ENCODE measurements at regions of chr15 and their contacts with region 1.

Region 1: DNA sequence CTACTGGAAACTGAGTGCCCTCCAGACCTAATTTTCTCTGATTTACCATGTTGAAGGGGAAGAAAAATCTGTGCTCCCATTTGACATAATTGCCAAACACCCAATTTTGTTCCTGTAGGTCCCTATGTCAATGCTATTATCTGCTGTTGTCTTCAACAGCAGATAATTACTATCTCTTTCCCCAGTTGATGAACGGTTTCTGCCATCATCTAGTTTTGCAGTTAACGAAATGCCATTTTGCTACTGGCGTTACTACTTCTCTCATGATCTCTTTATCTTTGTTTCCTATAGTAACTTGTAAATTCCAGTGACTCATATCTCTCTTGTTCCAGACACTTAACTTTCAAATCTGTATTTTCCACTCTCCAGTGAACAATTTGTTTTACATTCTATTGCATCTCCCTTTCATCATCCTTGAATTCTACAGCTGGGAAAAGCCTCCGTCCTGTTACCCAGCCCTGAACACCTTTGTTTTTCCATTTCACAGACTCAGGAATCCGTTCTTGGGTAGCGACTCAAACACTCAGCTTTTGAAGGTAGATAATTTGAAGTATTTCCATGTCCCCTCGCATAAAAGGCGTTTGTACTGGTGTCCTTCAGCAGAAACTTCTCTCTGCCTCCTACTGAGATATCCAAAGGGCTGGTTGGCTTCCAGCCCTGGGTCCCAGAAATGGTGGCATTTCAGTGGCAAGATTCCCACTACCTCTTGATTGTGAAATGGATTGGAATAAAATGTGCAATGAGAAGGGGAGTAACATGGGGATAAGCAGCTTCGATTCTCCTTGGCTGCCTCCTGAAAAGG is 111.7 kb downstream of the FOXB1 start:
- DNase-seq: no peak
- ATAC-seq: no peak
- H3K4me3 ChIP-seq: no peak overlapping the region
- H3K27ac ChIP-seq: peak overlapping the region in 1 of 2 experiments; percentile 15; a peak in 1 of 6 replicates
- H3K4me1 ChIP-seq: no peaks in the 10 kb centered on the region
- CTCF ChIP-seq: no peak
- EP300 ChIP-seq: no peak
- POLR2A ChIP-seq: no peak
- RAD21 ChIP-seq: no peak

Region 2: DNA sequence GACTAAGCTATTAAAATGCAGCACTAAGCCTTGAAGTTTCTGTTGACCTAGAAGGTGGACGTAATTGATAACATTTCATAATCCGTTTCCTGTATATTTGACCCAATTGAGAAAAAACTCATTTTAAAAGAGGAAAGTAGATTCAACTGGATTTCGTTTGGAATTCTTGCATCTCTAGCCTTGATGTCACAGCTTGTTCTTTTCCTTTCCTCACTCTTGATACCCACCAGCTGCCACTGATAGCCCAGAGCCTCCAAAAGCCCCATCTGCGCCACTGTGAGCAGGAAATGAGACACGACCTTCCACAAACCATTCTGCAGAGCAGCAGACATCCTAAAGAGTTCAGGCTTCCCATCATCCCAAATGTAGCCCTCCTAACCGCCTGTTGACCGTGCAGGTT is 49.8 kb before region 1 on chr15:
- CTCF ChIA-PET with region 1: no interaction called
- POLR2A ChIA-PET with region 1: no interaction called
- DNase-seq: no peak
- ATAC-seq: no peak
- H3K4me3 ChIP-seq: no peak overlapping the region
- H3K27ac ChIP-seq: no peak overlapping the region
- H3K4me1 ChIP-seq: peaks cover 6% of the 10 kb centered on the region; the same call in 1 of the 3 replicates
- CTCF ChIP-seq: no peak
- EP300 ChIP-seq: no peak
- POLR2A ChIP-seq: no peak
- RAD21 ChIP-seq: no peak

Region 3: GRCh38 chr15:60079210-60079609 is 36.6 kb before region 1 on chr15:
- CTCF ChIA-PET with region 1: no interaction called
- POLR2A ChIA-PET with region 1: no interaction called
- DNase-seq: peak in 1 of 2 experiments; percentile 24
- ATAC-seq: peak; percentile 62 to 76; a peak in 4 of 6 replicates
- H3K4me3 ChIP-seq: no peak overlapping the region
- H3K27ac ChIP-seq: no peak overlapping the region
- H3K4me1 ChIP-seq: no peaks in the 10 kb centered on the region
- CTCF ChIP-seq: 0 out of 3 replicates have a peak, but pooled peaks have one; percentile 14
- EP300 ChIP-seq: no peak
- POLR2A ChIP-seq: no peak
- RAD21 ChIP-seq: no peak

Region 4: DNA sequence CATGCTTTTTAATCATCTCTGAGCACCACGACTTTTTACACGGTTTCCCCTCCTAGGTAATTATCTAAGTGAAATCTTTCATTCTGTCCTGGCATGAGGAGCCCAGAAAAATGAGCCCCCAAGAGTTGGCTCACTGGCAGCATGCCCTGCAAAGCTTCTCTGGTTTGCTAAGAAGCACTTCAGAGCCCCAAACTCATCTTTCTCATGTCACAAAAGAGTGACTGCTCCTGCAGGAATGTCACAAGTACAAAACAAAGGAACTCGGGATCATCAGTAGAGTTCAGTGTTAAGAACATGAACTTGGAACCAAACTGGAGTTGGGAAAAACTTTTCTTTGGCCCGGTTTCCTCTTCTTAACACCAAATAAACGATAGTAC is 12.2 kb after region 1 on chr15:
- CTCF ChIA-PET with region 1: interaction called, 11 read pairs
- POLR2A ChIA-PET with region 1: no interaction called
- DNase-seq: no peak
- ATAC-seq: peak; percentile 41 to 45; a peak in 4 of 6 replicates
- H3K4me3 ChIP-seq: peak overlapping the region; percentile 50
- H3K27ac ChIP-seq: peak overlapping the region; percentile 48 to 72
- H3K4me1 ChIP-seq: no peaks in the 10 kb centered on the region
- CTCF ChIP-seq: no peak
- EP300 ChIP-seq: no peak
- POLR2A ChIP-seq: no peak
- RAD21 ChIP-seq: no peak

Region 5: DNA sequence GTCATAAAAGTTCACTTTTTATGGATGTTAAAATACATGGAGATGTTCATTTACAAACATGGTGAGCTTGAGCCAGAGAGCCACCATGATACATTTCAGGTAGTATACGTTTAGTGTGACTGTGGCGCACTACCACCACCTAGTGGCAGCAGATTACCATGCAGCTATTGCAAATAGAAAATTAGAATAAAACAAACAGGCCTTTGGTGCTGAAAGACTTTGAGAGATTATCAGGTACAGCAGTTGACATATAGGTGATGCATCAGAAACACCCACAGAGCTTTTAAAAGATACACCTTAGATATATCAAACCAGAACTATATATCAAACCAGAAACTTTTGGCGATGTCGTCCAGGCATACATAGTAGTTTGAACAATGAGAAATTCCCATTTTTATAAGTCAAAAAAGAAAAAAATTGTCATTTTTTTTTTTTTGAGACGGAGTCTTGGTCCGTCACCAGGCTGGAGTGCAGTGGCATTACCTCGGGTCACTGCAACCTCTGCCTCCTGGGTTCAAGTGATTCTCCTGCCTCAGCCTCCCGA is 405.1 kb after region 1 on chr15:
- CTCF ChIA-PET with region 1: no interaction called
- POLR2A ChIA-PET with region 1: no interaction called
- DNase-seq: peak; percentile 68 to 84
- ATAC-seq: peak; percentile 91 to 93
- H3K4me3 ChIP-seq: no peak overlapping the region
- H3K27ac ChIP-seq: no peak overlapping the region
- H3K4me1 ChIP-seq: peaks cover 13% of the 10 kb centered on the region
- CTCF ChIP-seq: peak; percentile 98
- EP300 ChIP-seq: no peak
- POLR2A ChIP-seq: no peak
- RAD21 ChIP-seq: peak; percentile 94 to 98